ENCODE measurements at regions of chr20 and their contacts with region 1.

Region 1: DNA sequence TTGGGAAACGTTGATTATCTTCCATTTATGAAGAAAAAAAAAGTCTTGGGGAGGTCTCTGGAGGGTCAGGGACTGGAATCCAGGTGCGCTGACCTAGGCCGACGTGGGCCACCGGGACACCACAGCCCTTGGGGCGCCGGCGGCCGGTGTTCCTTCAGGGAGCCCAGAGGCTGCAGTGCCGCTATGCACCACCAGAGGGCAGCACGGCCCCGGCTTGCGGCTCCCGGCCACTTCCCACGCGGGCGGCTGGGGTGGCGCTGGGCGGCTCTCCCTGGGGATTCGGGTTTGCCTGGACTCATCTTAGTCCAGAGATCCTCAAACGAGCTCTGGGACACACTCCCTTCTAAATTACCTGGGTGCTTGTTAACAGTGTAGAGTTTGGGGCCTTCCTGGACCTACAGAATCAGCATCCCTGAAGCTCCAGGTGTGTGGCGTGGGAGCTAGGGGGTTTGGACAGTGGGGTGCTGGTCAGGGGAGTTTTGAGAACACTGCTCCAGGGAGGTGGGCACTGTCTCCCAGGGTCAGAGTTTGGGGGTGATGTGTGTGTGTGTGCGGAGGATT is 23.0 kb upstream of the GTSF1L start:
- DNase-seq: peak; percentile 83
- ATAC-seq: peak; percentile 39
- H3K4me3 Mint-ChIP-seq: no peak overlapping the region
- H3K27ac Mint-ChIP-seq: peak overlapping the region; percentile 68
- H3K4me1 Mint-ChIP-seq: peaks cover 46% of the 10 kb centered on the region
- H3K27me3 Mint-ChIP-seq: no peaks in the 10 kb centered on the region

Region 2: GRCh38 chr20:43728044-43728529 is 21.7 kb before region 1 on chr20:
- CTCF ChIA-PET with region 1: interaction called, 13 read pairs
- POLR2A ChIA-PET with region 1: interaction called, 5 read pairs
- DNase-seq: peak; percentile 36
- ATAC-seq: no peak
- H3K4me3 Mint-ChIP-seq: no peak overlapping the region
- H3K27ac Mint-ChIP-seq: no peak overlapping the region
- H3K4me1 Mint-ChIP-seq: peaks cover 26% of the 10 kb centered on the region
- H3K27me3 Mint-ChIP-seq: no peaks in the 10 kb centered on the region

Region 3: GRCh38 chr20:43840382-43841070 is 90.7 kb after region 1 on chr20:
- CTCF ChIA-PET with region 1: interaction called, 52 read pairs
- POLR2A ChIA-PET with region 1: interaction called, 25 read pairs
- DNase-seq: peak; percentile 72
- ATAC-seq: peak; percentile 72
- H3K4me3 Mint-ChIP-seq: no peak overlapping the region
- H3K27ac Mint-ChIP-seq: no peak overlapping the region
- H3K4me1 Mint-ChIP-seq: peaks cover 56% of the 10 kb centered on the region
- H3K27me3 Mint-ChIP-seq: peaks cover 22% of the 10 kb centered on the region

Region 4: DNA sequence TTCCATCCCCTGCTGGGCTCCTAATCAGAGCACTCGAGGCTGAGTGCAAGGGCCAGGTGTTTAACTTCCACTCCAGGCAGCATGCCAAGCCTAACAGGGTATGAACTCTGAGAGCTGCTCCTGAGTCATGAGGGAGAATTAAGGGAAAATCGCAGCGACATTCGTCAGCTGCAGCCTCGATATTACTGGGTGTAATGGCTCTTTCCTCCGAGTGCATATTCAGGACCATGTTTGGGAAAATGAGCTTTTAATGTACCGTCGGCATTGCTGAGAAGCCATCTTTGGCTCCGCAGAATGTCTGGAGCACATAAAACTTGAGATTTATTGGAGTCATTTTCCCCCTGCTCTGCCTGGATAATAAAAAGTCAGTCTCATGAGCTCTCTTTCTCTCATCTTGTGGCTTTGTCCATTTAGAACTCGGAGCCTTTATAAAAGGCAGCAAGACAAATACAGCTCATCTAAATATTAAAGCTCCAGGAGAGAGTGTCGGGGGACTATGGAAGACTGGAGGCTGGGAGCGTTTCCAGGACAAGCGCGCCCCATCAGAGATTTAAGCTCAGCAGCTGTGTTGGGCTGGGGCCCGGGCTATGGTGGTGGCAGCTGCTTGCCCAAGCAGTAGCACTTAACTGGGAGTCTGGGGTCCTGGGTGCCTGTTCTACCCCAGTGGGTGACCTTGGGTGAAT is 268.6 kb after region 1 on chr20:
- CTCF ChIA-PET with region 1: interaction called, 11 read pairs
- POLR2A ChIA-PET with region 1: no interaction called
- DNase-seq: no peak
- ATAC-seq: no peak
- H3K4me3 Mint-ChIP-seq: no peak overlapping the region
- H3K27ac Mint-ChIP-seq: no peak overlapping the region
- H3K4me1 Mint-ChIP-seq: peaks cover 36% of the 10 kb centered on the region
- H3K27me3 Mint-ChIP-seq: peaks cover 53% of the 10 kb centered on the region

Region 5: GRCh38 chr20:44080646-44081267 is 330.9 kb after region 1 on chr20:
- CTCF ChIA-PET with region 1: interaction called, 63 read pairs
- POLR2A ChIA-PET with region 1: no interaction called
- DNase-seq: peak; percentile 85
- ATAC-seq: peak; percentile 95
- H3K4me3 Mint-ChIP-seq: no peak overlapping the region
- H3K27ac Mint-ChIP-seq: no peak overlapping the region
- H3K4me1 Mint-ChIP-seq: peaks cover 19% of the 10 kb centered on the region
- H3K27me3 Mint-ChIP-seq: peaks cover 7% of the 10 kb centered on the region

Measured in activated CD8-positive, alpha-beta T cell treated with anti-CD3 and anti-CD28 coated beads, Interleukin-2, amount 10 ng/mL, durations not matched to agents 7 days and 5 days (primary cell).